AG04449 (cell line): ENCODE measurements at regions of chr2 and their contacts with region 1.

Region 1: DNA sequence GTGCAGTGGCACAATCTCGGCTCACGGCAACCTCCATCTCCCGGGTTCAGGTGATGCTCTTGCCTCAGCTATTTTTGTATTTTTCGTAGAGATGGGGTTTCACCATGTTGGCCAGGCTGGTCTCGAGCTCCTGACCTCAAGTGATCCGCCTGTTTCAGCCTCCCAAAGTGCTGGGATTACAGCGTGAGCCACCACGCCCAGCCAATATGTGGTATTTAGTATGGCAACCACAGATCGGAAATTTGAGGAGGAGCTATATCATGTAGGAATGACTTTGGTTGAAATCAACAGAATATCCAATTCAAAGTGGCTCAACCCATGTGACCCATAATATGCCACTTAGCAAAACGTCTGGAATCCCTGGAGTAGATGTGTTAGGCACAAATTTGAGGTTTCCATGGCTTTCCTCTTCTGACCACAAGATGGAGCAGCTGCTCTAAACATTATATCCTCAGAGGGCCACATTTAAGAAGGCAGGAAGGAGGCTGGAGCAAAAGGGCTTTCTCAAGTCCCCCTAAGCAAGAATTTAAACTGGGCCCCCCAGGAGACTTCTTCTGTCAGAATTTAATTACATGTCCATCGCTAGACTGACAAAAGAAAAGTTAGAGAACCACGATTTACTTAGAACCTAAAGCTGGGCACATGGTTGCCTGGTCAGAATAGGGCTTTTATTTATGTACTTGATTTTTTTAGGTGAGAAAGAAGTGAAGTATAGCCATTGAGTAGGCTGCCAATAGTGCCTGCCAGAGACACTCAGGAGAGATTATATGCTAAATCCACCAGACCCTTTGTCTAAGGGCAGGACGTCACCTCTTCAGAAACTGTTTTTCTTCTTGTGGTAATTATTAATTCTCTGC is 49.6 kb upstream of the ITSN2 start:
- DNase-seq: peak; percentile 17
- H3K4me3 ChIP-seq: no peak overlapping the region
- CTCF ChIP-seq: peak; percentile 73

Region 2: DNA sequence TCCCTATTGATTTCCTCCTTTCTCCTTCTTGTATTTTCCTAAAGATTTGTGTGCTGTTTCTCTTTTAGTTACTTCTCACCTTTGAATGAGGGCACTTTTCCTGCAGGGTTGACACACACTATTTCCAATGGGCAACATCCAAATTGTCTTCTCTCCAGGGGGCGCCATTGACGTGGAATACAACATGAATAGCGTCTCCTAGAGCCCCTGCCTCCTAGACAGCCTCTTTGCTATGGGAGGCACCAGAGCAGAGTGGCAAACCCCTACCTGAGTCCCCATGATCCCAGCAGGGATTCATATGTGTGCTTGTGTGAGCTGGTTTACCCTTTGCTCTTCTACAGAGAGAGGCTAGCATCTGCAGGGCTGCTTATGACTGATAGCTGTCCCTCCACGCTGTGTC is 11.7 kb after region 1 on chr2:
- CTCF ChIA-PET with region 1: interaction called, 64 read pairs
- POLR2A ChIA-PET with region 1: no interaction called
- DNase-seq: no peak
- H3K4me3 ChIP-seq: no peak overlapping the region
- CTCF ChIP-seq: peak; percentile 53

Region 3: GRCh38 chr2:24792874-24793760 is 383.2 kb after region 1 on chr2 and contains the starts of genes CENPO and PTRHD1:
- CTCF ChIA-PET with region 1: interaction called, 30 read pairs
- POLR2A ChIA-PET with region 1: interaction called, 3 read pairs
- DNase-seq: peak; percentile 77
- H3K4me3 ChIP-seq: peak within 1 kb of the TSS; percentile 94
- CTCF ChIP-seq: peak; percentile 76

Region 4: DNA sequence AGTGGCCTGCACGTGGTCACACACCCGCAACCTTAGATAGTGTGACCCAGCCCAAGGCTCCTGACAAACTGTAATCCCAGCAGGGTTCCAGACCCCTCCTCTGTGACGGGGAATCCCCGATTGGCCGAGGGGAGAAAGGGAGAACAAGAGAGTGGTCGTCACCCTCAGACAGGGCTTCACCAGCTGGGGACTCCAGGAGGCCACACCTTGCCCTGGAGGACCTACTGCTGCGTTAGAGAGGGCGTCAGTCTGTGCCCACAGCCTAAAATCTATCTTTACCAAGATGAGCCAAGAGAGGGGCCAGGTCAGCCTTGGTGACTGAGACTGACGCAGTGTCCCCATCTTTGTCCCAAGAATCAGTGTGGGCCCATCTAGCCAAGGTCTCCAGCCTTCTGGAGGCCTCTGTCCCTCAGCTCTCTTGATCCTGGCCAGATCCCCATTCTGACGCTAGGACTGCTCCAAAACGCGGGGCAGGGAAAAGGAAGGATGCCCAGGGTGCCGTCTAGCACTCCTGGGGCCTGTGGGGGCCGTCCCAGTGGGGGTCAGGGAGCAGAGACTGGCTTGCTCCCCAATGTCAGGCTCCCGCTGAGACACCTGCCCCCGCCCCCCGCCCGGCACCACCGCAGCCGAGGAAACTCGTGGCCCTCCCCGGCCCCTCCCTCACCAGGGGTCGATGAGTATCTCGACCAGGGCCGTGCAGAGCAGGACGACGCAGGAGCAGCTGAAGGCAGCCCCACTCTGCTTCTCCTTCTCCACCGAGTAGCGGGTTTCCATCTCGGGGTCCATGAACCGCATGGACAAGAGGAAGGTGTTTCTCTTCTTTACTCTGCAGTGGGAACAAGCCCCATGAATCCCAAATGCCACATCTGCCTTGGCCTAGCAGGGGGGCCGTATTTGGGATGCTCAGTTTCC is 424.1 kb after region 1 on chr2:
- CTCF ChIA-PET with region 1: interaction called, 296 read pairs
- POLR2A ChIA-PET with region 1: no interaction called
- DNase-seq: no peak
- H3K4me3 ChIP-seq: no peak overlapping the region
- CTCF ChIP-seq: no peak

Region 5: DNA sequence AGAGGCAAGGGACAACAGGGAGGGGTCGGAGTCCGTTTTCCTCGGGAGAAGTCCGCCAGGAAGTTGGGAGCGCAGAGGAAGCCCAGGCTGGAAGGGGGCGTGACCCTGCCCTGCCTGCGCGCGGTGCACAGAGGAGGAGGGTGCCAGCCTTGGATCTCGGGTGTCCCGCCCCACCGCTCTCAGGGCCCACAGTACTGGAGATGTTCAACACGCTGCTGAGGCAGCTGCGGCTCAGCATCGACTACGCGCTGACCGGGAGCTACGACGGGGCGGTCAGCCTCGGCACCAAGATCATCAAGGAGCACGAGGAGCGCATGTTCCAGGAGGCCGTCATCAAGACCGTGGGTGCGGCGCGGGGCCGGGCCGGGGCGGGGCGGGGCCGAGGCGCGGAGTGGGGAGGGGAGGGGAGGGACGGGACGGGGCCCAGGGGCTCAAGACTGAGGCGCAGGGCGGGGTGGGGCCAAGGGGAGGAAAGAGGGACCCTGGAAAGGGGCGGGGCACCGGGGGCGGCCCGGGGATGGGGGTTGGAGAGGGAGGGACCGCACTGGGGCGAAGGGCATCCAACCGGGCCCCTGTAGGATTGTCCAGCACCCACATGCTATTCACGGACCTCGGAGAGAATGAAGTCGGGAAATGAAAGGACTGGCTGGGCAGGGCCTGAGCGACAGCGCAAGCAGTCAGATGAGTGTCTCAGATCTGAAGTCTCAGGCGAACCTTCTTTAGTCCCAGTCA is 721.8 kb after region 1 on chr2:
- CTCF ChIA-PET with region 1: interaction called, 20 read pairs
- POLR2A ChIA-PET with region 1: no interaction called
- DNase-seq: no peak
- H3K4me3 ChIP-seq: no peak overlapping the region
- CTCF ChIP-seq: no peak